Activated CD4-positive, alpha-beta memory T cell treated with anti-CD3 and anti-CD28 coated beads for 36 hours (primary cell): ENCODE measurements at regions of chr4 and their contacts with region 1.

Region 1: GRCh38 chr4:81844717-81845116 is 373.0 kb upstream of the RASGEF1B start:
- DNase-seq: peak; percentile 79
- H3K4me3 Mint-ChIP-seq: no peak overlapping the region
- H3K27ac Mint-ChIP-seq: no peak overlapping the region
- H3K4me1 Mint-ChIP-seq: peaks cover 8% of the 10 kb centered on the region
- H3K27me3 Mint-ChIP-seq: peaks cover 2% of the 10 kb centered on the region

Region 2: DNA sequence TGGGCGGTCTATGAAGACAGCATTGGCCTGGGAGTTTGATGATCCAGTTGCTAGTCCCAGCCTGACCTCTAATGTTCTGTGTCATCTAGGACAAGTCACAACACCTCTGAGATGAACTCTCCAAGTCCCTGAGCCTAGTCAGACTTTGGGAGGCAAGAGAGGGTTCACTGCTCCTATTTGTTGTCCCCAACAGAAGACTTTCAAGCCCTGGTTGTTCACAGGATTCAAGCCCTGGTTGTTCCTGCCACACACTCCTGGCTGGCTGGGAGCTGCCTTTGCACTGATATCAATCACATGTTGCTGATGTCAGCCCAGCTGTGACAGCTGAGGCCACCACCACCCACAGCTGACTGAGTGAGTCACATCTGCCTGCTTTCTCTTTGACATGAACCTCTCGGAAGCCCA is 119.8 kb before region 1 on chr4:
- CTCF ChIA-PET with region 1: interaction called, 4 read pairs
- POLR2A ChIA-PET with region 1: no interaction called
- intact Hi-C with region 1: loop called (anchors 2 kb)
- DNase-seq: peak; percentile 80
- H3K4me3 Mint-ChIP-seq: no peak overlapping the region
- H3K27ac Mint-ChIP-seq: no peak overlapping the region
- H3K4me1 Mint-ChIP-seq: peaks cover 16% of the 10 kb centered on the region
- H3K27me3 Mint-ChIP-seq: peaks cover 4% of the 10 kb centered on the region

Region 3: GRCh38 chr4:81827577-81828202 is 17.0 kb before region 1 on chr4:
- CTCF ChIA-PET with region 1: interaction called, 6 read pairs
- POLR2A ChIA-PET with region 1: no interaction called
- intact Hi-C with region 1: loop called (anchors 1 kb)
- DNase-seq: peak; percentile 49
- H3K4me3 Mint-ChIP-seq: no peak overlapping the region
- H3K27ac Mint-ChIP-seq: peak overlapping the region; percentile 16
- H3K4me1 Mint-ChIP-seq: peaks cover 15% of the 10 kb centered on the region
- H3K27me3 Mint-ChIP-seq: peaks cover 7% of the 10 kb centered on the region

Region 4: GRCh38 chr4:82201805-82202641 is 357.3 kb after region 1 on chr4:
- CTCF ChIA-PET with region 1: interaction called, 4 read pairs
- POLR2A ChIA-PET with region 1: no interaction called
- intact Hi-C with region 1: loop called (anchors 1 kb)
- DNase-seq: peak; percentile 54
- H3K4me3 Mint-ChIP-seq: no peak overlapping the region
- H3K27ac Mint-ChIP-seq: no peak overlapping the region
- H3K4me1 Mint-ChIP-seq: no peaks in the 10 kb centered on the region
- H3K27me3 Mint-ChIP-seq: no peaks in the 10 kb centered on the region

Region 5: DNA sequence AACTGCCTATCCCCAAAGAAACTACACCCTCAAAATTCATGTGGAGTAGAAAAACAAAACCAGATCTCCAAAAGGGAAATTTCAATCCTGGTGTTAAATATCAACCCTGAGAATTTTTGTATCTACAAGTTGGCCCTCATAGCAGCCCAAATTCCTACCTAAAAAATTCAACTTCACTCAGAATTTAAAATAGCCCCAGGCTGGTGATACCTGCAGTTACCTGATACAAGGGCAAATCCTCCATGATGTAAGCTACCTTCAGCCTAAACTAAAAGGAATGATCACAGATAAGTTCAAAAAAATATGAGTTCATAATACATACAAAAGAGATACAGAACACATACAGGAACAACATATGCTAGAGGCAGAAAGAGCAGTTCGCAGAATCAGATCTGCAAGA is 390.6 kb after region 1 on chr4:
- CTCF ChIA-PET with region 1: no interaction called
- POLR2A ChIA-PET with region 1: no interaction called
- intact Hi-C with region 1: no loop called
- DNase-seq: no peak
- H3K4me3 Mint-ChIP-seq: no peak overlapping the region
- H3K27ac Mint-ChIP-seq: no peak overlapping the region
- H3K4me1 Mint-ChIP-seq: no peaks in the 10 kb centered on the region
- H3K27me3 Mint-ChIP-seq: peaks cover 14% of the 10 kb centered on the region

Region 6: DNA sequence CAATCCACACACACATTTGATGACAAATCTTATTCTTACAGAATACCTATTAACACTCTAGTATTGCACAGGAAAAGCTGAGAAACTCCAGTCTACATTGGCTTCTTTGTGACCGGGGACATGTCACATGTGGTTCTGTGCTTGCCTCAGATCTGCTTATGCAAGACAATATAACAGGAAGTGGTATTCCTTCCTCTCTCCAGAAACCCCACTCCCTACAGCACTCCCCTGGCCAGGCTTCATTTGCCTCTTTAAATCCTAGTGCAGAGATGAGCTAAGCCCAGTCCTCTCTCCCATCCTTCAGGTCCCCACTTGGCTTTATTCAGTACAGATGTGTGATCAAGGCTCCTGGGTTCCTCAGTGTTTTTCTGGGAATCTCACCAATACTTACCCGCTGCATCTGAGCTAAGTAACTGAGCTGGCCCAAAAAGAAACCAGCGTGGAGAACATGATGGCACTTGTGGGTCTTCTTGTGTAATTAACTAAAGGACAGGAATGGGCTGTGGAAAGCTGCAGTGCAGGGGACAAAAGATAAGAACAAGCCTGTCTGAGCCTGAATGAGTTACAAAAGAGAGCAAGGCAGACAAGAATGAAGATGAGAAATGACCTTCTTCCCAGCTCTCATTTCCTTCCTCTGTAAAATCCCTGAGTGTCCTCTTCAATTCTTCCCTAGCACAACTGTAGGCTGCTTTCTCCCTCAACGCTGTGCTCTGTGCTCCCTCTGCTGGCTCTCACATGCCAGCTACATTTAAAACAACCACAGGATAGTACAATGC is 423.5 kb after region 1 on chr4:
- CTCF ChIA-PET with region 1: interaction called, 3 read pairs
- POLR2A ChIA-PET with region 1: no interaction called
- intact Hi-C with region 1: loop called (anchors 2 kb)
- DNase-seq: peak; percentile 54
- H3K4me3 Mint-ChIP-seq: no peak overlapping the region
- H3K27ac Mint-ChIP-seq: no peak overlapping the region
- H3K4me1 Mint-ChIP-seq: peaks cover 9% of the 10 kb centered on the region
- H3K27me3 Mint-ChIP-seq: peaks cover 3% of the 10 kb centered on the region

Region 7: DNA sequence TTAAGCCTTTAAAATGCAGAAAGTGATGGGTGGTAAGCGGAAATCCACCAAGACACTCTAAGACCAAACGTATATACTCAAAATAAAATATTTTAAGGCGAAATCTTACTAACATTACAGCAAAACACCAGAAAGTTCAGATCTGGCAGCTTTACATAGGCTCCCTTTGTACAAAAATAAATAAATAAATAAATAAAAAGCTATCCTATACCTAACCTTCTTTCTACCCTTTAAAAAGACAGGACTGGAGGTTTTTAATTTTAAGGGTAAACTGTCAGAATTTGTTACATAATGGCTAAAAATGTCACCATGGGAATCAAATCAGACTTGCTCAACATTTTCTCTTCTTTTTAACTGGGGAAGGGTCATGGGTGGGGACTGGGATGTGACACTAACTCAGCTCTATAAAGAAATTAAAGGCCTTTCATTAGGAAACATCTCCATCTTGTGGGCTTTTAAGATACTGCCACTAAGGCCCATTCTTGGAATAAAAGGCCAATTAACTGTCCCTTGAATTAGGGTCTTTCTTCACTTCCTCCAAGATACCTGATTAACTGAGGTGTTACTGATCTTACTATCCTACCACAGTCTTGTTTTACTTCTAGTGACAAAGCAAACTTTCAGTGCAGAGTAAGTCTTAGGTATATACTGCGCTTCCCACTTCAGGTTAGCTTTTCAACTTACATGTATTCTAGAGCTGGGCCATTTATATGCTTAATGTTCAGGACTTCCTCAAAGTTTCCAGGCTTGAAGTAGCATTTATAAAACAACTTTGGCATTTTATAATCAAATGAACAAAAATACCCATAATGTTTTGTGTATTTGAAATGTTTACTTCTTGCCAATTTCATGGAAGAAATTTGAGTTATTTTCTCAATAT is 515.8 kb after region 1 on chr4:
- CTCF ChIA-PET with region 1: no interaction called
- POLR2A ChIA-PET with region 1: no interaction called
- intact Hi-C with region 1: loop called (anchors 10 kb)
- DNase-seq: no peak
- H3K4me3 Mint-ChIP-seq: no peak overlapping the region
- H3K27ac Mint-ChIP-seq: peak overlapping the region; percentile 13
- H3K4me1 Mint-ChIP-seq: peaks cover 81% of the 10 kb centered on the region
- H3K27me3 Mint-ChIP-seq: no peaks in the 10 kb centered on the region